ENCODE measurements at regions of chr18 and their contacts with region 1.

Region 1: DNA sequence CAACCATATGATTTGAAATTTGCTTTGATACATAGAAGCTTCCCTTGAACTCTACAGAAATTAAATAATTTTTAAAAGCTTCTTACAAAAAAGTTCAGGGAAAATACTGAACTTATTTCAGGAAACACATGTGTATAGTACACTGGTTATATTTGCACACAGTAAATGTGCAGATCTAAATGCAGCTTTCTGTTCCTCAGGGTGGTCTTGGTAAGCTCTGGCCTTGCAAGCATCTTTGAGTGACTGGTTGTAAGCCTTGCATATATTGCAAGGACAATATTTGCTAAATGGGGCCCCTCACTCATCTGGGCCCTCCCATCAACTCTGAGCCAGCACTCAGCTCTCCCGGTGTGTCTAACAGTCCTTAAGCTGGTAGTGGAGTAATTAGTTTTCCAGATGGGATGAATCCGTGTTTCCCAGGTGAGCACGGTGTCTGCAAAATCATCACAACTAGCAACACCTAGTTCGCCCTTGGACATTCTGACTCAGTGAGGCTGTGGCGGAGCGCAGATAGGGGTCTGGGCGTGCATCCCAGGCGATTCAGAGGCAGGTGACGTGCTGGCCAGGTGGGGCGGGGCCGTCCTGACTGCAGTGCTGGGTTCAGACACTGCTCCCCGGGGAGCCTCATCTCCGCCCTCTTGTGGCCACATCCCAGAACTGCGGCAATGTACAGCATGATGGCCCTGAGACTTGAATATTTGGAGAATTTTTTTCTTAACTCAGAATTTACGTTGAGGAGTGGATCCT is 149.6 kb downstream of the MBP start:
- DNase-seq: peak; percentile 94
- H3K4me3 Mint-ChIP-seq: no peak overlapping the region
- H3K27ac Mint-ChIP-seq: no peak overlapping the region
- H3K4me1 Mint-ChIP-seq: peaks cover 6% of the 10 kb centered on the region
- H3K27me3 Mint-ChIP-seq: peaks cover 2% of the 10 kb centered on the region

Region 2: GRCh38 chr18:76922107-76922506 is 60.9 kb before region 1 on chr18:
- CTCF ChIA-PET with region 1: interaction called, 46 read pairs
- DNase-seq: peak; percentile 74
- H3K4me3 Mint-ChIP-seq: no peak overlapping the region
- H3K27ac Mint-ChIP-seq: peak overlapping the region; percentile 15
- H3K4me1 Mint-ChIP-seq: peaks cover 15% of the 10 kb centered on the region
- H3K27me3 Mint-ChIP-seq: no peaks in the 10 kb centered on the region

Region 3: DNA sequence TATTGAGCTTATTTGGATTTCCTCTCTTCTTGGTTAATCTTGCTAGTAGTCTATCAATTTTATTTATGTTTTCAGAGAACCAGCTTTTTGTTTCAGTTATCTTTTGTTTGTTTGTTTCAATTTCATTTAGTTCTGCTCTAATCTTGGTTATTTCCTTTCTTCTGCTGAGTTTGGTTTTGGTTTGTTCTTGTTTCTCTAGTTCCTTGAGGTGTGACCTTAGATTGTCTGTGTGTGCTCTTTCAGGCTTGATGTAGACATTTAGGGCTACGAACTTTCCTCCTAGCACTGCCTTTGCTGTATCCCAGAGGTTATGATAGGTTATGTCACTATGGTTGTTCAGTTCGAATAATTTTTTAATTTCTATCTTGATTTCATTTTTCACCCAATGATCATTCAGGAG is 19.1 kb before region 1 on chr18:
- CTCF ChIA-PET with region 1: interaction called, 20 read pairs
- DNase-seq: no peak
- H3K4me3 Mint-ChIP-seq: no peak overlapping the region
- H3K27ac Mint-ChIP-seq: peak overlapping the region; percentile 33
- H3K4me1 Mint-ChIP-seq: peaks cover 32% of the 10 kb centered on the region
- H3K27me3 Mint-ChIP-seq: no peaks in the 10 kb centered on the region

Region 4: DNA sequence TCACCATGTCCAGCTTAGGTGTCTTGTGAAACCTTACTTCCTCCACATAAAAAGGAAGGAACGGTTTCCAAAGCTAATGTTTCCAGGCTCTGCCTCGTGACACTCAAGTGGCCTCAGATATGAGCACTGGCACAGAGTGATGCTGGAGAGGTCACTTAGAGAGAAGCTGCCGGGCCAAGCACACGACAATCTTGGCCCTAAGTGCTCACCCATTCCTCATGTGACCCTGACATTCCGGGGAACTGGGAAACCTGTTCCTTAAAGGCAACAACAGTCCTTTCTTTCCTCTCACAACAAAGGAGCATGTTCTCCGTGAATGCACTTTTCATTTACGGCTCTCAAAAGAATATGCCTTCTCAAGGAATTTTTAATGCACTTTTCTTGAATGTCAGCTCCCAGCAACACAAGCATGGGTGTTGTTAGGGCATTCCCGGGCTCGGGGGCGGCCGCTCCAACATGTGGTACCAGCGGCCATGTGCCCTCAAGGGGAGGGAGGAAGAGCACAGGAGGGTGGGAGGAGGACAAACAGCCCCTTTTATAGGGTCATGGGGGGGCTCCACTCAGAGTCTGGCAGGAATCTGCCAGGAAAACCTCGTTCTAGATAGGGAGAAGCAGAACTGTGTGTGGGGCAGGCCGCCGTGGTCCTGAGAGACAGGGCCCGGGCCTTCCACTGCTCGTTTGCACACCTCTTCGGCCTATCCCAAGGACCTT is 31.0 kb after region 1 on chr18:
- CTCF ChIA-PET with region 1: no interaction called
- DNase-seq: no peak
- H3K4me3 Mint-ChIP-seq: no peak overlapping the region
- H3K27ac Mint-ChIP-seq: no peak overlapping the region
- H3K4me1 Mint-ChIP-seq: peaks cover 5% of the 10 kb centered on the region
- H3K27me3 Mint-ChIP-seq: no peaks in the 10 kb centered on the region